ENCODE measurements at regions of chr11 and their contacts with region 1.

Region 1: GRCh38 chr11:107799218-107799859 is 59.2 kb downstream of the SLC35F2 start:
- DNase-seq: peak; percentile 13 to 52 (median 31)
- ATAC-seq: peak; percentile 78
- H3K4me3 ChIP-seq: no peak overlapping the region
- H3K4me3 Mint-ChIP-seq: no peak overlapping the region
- H3K27ac ChIP-seq: no peak overlapping the region
- H3K27ac Mint-ChIP-seq: no peak overlapping the region
- H3K4me1 ChIP-seq: no peaks in the 10 kb centered on the region
- H3K4me1 Mint-ChIP-seq: peaks cover 0 to 3% (median 0%) of the 10 kb centered on the region in 7 donors
- H3K27me3 ChIP-seq: no peaks in the 10 kb centered on the region
- H3K27me3 Mint-ChIP-seq: no peaks in the 10 kb centered on the region

Region 2: DNA sequence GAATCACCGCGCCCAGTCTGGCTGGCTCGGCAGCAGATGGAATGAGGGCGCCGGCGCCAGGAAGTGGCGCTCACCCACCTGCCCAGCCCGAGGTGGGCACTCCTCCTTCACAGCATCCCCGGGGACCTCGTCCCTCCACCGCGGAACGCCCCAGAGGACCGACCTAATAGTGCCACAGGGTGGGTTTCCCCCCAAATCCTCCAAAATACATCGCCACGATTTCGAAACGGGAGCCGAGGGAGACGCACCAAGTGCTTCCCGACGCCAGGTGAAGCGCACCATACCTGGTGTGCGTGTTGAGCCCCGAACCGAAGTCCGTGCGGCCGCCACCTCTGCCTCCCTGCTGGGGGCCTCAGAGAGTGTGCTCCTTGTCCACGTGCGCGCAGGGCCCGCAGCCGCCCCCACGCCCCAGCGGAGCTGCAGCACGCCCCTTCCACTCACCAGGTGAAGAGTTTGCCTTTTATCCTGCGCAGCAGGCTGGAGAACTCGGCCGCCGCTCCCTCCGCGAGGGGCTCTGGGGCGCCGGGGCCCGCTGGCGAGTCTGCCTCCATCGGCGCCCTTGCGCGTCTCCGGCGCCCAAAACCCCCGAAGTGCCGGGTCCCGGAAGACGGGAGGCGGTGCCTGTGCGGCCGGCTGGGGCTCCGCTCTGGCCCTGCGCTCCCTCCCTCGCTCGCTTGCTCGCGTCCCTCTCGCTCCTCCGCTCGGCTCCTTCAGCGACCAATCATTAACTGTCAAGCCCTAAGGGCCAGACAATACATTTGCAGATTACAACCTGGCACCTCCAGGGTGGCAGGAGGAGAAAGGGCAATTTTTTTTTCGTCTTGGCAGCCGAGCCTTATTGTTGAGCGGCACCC is 59.1 kb after region 1 on chr11 and contains the start of gene SLC35F2:
- CTCF ChIA-PET with region 1: no interaction called
- POLR2A ChIA-PET with region 1: no interaction called
- intact Hi-C with region 1: loop called in 1 of 2 experiments (anchors 2 kb)
- DNase-seq: peak; percentile 15 to 81 (median 45)
- ATAC-seq: peak; percentile 88
- H3K4me3 ChIP-seq: peak within 1 kb of the TSS; percentile 88
- H3K4me3 Mint-ChIP-seq: peak within 1 kb of the TSS; percentile 89 to 98 (median 95)
- H3K27ac ChIP-seq: peak within 1 kb of the TSS; percentile 65
- H3K27ac Mint-ChIP-seq: peak within 1 kb of the TSS; percentile 21 to 88 (median 77)
- H3K4me1 ChIP-seq: no peaks in the 10 kb centered on the region
- H3K4me1 Mint-ChIP-seq: peaks cover 5 to 33% (median 26%) of the 10 kb centered on the region in 7 donors
- H3K27me3 ChIP-seq: no peaks in the 10 kb centered on the region
- H3K27me3 Mint-ChIP-seq: peaks cover 0 to 17% (median 4%) of the 10 kb centered on the region in 5 donors
- total RNA-seq, gene SLC35F2: 3.8 to 8.9 (median 4.5) TPM

Region 3: DNA sequence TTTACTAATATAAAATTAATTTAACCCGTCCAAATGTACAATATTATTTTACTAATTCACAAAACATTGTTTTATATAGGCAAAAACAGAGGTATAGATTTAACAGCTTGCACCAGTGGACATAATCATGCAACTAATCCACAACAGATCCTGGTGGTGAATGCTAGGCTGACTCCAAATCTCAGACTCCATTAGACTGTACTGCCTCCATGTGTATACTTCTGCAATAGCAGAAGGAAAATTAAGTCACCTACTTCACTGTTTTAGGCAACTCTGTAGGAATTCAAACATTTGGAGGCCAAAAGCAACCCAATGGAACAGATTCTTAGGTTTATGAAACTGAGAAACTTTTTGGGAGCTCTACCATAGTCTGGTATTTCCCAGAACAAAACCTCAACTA is 98.9 kb after region 1 on chr11:
- CTCF ChIA-PET with region 1: no interaction called
- POLR2A ChIA-PET with region 1: no interaction called
- intact Hi-C with region 1: loop called in 1 of 2 experiments (anchors 1 kb)
- DNase-seq: peak in 2 of 9 donors; percentile 3 to 9
- ATAC-seq: peak; percentile 76
- H3K4me3 ChIP-seq: no peak overlapping the region
- H3K4me3 Mint-ChIP-seq: no peak overlapping the region
- H3K27ac ChIP-seq: no peak overlapping the region
- H3K27ac Mint-ChIP-seq: no peak overlapping the region
- H3K4me1 ChIP-seq: no peaks in the 10 kb centered on the region
- H3K4me1 Mint-ChIP-seq: no peaks in the 10 kb centered on the region
- H3K27me3 ChIP-seq: no peaks in the 10 kb centered on the region
- H3K27me3 Mint-ChIP-seq: peaks cover 0 to 11% (median 9%) of the 10 kb centered on the region in 5 donors

Region 4: DNA sequence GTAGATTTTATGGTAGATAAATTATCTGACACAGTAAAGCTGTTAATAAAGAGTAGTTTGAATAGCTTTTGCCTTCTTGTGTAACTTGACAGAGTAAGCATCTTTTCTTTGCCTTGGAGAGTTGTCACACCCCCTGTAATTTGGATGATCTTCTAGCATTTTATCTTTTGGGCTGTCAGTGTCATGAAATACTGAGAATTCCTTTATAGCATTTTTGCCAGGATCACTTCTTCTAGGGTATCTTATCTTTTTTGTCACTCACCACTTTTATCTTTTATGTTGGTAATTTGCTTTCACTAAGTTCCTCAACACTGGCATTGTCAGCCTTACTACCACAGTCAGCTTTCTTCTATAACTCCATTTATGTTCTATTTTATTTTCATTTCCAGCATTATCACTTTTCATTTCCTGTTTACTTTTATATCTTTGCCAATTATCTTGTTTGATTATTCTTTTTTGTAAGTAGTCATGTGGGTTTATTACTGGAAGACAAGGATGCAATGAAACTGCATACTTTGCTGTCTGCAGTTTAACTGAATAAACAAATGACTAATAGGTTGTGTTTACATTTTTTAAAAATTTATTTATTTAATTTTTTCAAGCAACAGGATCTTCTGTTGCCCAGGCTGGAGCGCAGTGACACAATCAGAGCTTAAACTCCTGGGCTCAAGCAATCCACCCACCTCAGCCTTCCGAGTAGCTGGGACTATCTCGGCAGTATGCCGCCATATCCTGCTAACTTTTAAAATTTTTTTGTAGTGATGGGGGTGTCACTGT is 294.0 kb after region 1 on chr11:
- CTCF ChIA-PET with region 1: no interaction called
- POLR2A ChIA-PET with region 1: no interaction called
- intact Hi-C with region 1: no loop called
- DNase-seq: no peak
- ATAC-seq: no peak
- H3K4me3 ChIP-seq: no peak overlapping the region
- H3K4me3 Mint-ChIP-seq: no peak overlapping the region
- H3K27ac ChIP-seq: no peak overlapping the region
- H3K27ac Mint-ChIP-seq: peak overlapping the region in 5 of 9 donors; percentile 33 to 72 (median 44)
- H3K4me1 ChIP-seq: no peaks in the 10 kb centered on the region
- H3K4me1 Mint-ChIP-seq: peaks cover 0 to 7% (median 0%) of the 10 kb centered on the region in 7 donors
- H3K27me3 ChIP-seq: no peaks in the 10 kb centered on the region
- H3K27me3 Mint-ChIP-seq: no peaks in the 10 kb centered on the region

Measured in naive thymus-derived CD4-positive, alpha-beta T cell (primary cell).